AG04450 (cell line): ENCODE measurements at regions of chr6 and their contacts with region 1.

Region 1: DNA sequence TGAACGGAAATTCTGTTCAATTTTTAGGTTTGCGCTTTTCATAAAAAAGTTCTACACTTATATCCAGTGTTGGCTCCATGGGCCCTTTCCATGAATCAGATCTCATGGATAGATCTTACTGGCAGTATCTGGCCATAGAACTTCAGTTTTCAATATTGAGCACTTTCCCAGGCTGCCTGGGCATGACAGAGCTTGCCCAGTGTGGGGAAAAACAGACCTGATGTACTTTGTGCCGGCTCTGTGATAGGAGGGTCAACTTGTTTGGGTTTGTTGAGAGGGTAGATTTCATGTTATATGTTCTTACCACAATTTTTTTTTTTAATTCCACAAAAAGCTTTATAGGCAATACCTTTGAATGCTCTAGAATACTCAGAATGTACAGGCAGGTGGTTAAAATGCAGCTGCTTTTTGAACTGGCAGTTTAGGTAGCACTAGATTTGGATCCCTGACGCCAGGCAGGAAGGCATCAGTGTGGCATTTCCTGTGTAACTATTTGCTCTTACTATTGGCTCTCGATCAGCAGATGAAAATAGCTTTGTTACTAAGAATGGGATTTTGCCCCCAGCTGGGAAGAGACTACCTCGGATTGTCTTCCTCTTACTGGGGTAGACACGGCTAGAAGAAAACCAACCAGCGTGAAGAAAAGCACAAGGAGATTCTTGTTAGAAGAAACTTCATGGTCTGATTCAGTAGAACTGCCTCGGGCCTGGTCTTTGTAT is 404.9 kb upstream of the SOX4 start:
- DNase-seq: no peak
- H3K4me3 ChIP-seq: no peak overlapping the region
- H3K27ac ChIP-seq: no peak overlapping the region
- H3K27me3 ChIP-seq: no peaks in the 10 kb centered on the region
- CTCF ChIP-seq: no peak

Region 2: GRCh38 chr6:21003780-21004541 is 184.7 kb before region 1 on chr6:
- CTCF ChIA-PET with region 1: no interaction called
- POLR2A ChIA-PET with region 1: no interaction called
- DNase-seq: peak; percentile 62
- H3K4me3 ChIP-seq: no peak overlapping the region
- H3K27ac ChIP-seq: peak overlapping the region; percentile 33
- H3K27me3 ChIP-seq: no peaks in the 10 kb centered on the region
- CTCF ChIP-seq: no peak

Region 3: DNA sequence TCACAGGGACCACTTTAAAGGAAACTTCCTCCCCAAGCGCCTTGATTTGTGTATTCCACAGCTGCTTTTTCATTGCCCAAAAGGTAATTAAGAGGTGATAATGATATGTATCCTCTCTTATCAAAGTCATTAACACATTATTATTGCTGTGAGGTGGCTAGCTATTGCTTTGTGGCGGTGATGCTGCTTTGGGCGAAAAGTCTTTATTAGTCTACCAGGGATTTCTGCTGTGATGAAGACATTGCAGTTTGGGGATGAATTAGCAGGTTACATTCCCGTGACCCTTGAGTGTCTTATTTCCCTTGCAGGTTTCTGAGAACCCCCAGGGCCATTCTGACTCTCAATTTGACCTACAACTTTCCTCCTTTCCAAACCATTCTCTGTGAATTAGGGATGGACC is 261.5 kb after region 1 on chr6:
- CTCF ChIA-PET with region 1: no interaction called
- POLR2A ChIA-PET with region 1: interaction called, 16 read pairs
- DNase-seq: no peak
- H3K4me3 ChIP-seq: no peak overlapping the region
- H3K27ac ChIP-seq: no peak overlapping the region
- H3K27me3 ChIP-seq: no peaks in the 10 kb centered on the region
- CTCF ChIP-seq: no peak